SK-N-SH (cell line): ENCODE measurements at regions of chr5 and their contacts with region 1.

Region 1: DNA sequence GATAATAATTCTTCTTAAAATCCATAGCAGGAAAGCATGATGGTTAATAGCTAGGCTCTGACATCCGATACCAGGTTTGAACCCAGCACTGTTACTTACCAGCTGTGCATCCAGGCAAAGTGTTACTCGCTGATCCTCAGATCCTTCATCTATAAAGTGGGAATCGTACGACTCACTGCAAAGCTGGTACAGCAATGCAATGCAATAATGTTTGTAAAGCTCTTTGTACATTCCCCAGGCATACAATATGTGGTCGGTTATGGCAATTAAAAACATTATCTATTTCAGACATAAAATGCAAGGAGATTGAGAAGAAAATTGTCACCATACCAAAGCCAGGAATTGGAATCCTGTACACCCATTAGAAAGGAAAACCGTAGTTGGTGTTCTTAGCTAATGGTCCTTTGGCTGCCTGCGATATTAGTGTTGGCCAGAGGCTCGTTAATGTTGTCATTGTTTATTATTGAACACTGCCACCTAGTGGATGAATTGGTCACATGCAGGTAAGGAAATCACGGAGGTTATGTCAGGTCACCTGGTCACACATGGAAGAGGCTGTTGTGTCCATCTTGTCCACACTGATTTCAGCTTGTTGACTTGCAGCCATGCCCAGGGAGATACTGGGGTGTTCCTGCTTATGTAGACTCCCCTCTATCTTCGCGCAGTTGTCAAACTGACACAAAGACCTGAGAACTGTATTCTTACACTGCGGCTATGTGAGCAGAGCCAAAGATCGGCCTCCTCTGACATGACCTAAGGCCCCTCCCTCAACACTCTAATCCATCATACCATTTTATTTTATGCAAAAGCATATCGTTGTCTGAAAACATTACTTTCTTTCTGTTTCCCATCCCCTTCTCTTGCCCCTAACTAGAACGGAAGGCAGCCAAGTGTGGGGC is 87.5 kb upstream of the PPP2R2B start:
- DNase-seq: peak; percentile 62
- H3K4me3 ChIP-seq: no peak overlapping the region; a peak in 1 of 4 replicates
- H3K27ac ChIP-seq: no peak overlapping the region; a peak in 1 of 4 replicates
- H3K4me1 ChIP-seq: peaks cover 0 to 12% of the 10 kb centered on the region in 2 experiments; a peak in 2 of 4 replicates
- H3K27me3 ChIP-seq: no peaks in the 10 kb centered on the region
- CTCF ChIP-seq: peak; percentile 85
- EP300 ChIP-seq: no peak
- RAD21 ChIP-seq: peak; percentile 99

Region 2: DNA sequence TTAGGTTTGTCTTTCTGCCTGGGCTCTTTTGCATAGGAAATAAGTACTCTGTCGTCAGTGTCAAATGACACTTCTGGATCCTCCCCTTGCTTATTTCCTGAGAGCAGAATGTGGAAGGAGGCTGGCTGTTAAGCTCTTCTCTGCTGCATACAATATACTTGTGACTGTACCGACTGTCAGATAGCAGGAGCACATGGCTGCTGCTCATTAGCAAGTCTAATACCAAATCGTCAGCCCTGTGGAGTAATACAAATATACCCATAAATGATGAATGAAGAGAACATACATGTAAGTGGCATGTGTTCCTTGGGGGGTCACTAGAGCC is 449.9 kb before region 1 on chr5 and contains the start of gene GPR151:
- CTCF ChIA-PET with region 1: interaction called, 10 read pairs
- POLR2A ChIA-PET with region 1: no interaction called
- DNase-seq: no peak
- H3K4me3 ChIP-seq: no peak within 1 kb of the TSS
- H3K27ac ChIP-seq: no peak within 1 kb of the TSS
- H3K4me1 ChIP-seq: no peaks in the 10 kb centered on the region
- H3K27me3 ChIP-seq: no peaks in the 10 kb centered on the region
- CTCF ChIP-seq: no peak
- EP300 ChIP-seq: no peak
- RAD21 ChIP-seq: no peak
- polyA plus RNA-seq, gene GPR151: not detected in 2 replicates

Region 3: GRCh38 chr5:146541958-146542849 is 423.8 kb before region 1 on chr5:
- CTCF ChIA-PET with region 1: interaction called, 176 read pairs
- POLR2A ChIA-PET with region 1: no interaction called
- DNase-seq: peak; percentile 74
- H3K4me3 ChIP-seq: peak overlapping the region in 1 of 2 experiments; percentile 20; a peak in 1 of 4 replicates
- H3K27ac ChIP-seq: no peak overlapping the region
- H3K4me1 ChIP-seq: no peaks in the 10 kb centered on the region; a peak in 1 of 4 replicates
- H3K27me3 ChIP-seq: no peaks in the 10 kb centered on the region
- CTCF ChIP-seq: peak; percentile 94
- EP300 ChIP-seq: no peak
- RAD21 ChIP-seq: peak; percentile 96

Region 4: DNA sequence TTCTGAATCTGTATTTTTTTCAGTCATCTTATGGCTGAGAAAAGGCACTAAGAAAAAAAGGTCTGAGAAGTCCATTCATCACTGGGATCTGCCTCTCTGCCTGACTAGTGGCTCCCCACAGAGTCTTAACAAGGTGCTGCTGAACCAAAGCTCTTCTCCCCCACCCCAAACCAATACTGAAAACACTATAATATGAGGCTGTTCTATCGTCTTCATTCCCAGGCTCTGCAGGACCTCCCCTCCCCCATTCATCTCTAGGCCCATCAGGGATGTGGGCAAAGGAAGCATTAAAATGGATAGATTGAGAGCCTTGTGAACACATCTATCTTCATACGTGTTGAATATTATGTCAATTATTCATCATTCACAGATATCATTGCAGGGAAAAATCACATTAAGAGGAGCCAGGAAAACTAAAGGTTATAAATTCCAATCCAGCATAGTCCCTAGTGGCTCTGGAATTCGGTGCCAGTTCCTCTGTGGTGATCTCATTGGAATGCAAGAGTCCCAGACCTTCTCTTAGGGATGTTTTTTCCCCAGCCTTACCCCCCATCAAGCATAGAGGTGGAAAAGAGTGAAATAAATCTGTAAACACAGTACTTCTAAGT is 405.7 kb before region 1 on chr5:
- CTCF ChIA-PET with region 1: interaction called, 38 read pairs
- POLR2A ChIA-PET with region 1: no interaction called
- DNase-seq: no peak
- H3K4me3 ChIP-seq: peak overlapping the region in 1 of 2 experiments; percentile 3; a peak in 1 of 4 replicates
- H3K27ac ChIP-seq: peak overlapping the region in 1 of 2 experiments; percentile 72; a peak in 3 of 4 replicates
- H3K4me1 ChIP-seq: peaks cover 0 to 21% of the 10 kb centered on the region in 2 experiments
- H3K27me3 ChIP-seq: no peaks in the 10 kb centered on the region
- CTCF ChIP-seq: no peak
- EP300 ChIP-seq: peak in 1 of 2 experiments; percentile 63; a peak in 1 of 4 replicates
- RAD21 ChIP-seq: no peak

Region 5: DNA sequence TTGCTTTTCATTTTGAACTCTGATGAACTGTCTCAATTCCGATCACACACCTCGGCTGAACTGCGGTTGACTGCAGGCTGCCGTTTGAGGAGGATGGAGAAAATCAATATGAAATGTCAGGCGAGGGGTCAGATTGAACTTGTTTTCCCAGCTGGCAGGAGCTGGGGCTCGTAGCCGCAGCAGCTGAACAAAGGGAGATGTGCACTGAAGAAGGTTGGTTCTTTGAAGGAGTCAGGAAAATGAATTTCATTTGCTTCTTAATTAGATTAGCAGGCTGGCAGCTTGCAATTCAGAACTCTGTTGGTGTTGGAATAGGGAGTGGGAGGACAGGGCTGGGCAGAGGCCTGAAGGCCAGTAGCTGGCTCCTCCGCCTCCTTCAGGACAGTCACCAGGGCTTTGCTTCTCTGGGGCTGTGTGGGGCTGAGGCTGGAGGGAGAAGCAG is 332.7 kb before region 1 on chr5:
- CTCF ChIA-PET with region 1: interaction called, 12 read pairs
- POLR2A ChIA-PET with region 1: no interaction called
- DNase-seq: no peak
- H3K4me3 ChIP-seq: no peak overlapping the region
- H3K27ac ChIP-seq: no peak overlapping the region
- H3K4me1 ChIP-seq: peaks cover 0 to 12% of the 10 kb centered on the region in 2 experiments; a peak in 1 of 4 replicates
- H3K27me3 ChIP-seq: no peaks in the 10 kb centered on the region
- CTCF ChIP-seq: no peak
- EP300 ChIP-seq: no peak
- RAD21 ChIP-seq: no peak

Region 6: GRCh38 chr5:146947181-146947941 is 18.6 kb before region 1 on chr5:
- CTCF ChIA-PET with region 1: interaction called, 39 read pairs
- POLR2A ChIA-PET with region 1: no interaction called
- DNase-seq: peak; percentile 21
- H3K4me3 ChIP-seq: no peak overlapping the region; a peak in 1 of 4 replicates
- H3K27ac ChIP-seq: no peak overlapping the region
- H3K4me1 ChIP-seq: peaks cover 0 to 6% of the 10 kb centered on the region in 2 experiments; a peak in 2 of 4 replicates
- H3K27me3 ChIP-seq: no peaks in the 10 kb centered on the region
- CTCF ChIP-seq: peak; percentile 65
- EP300 ChIP-seq: no peak
- RAD21 ChIP-seq: peak; percentile 72

Region 7: GRCh38 chr5:147369742-147370374 is 403.8 kb after region 1 on chr5:
- CTCF ChIA-PET with region 1: interaction called, 20 read pairs
- POLR2A ChIA-PET with region 1: no interaction called
- DNase-seq: no peak
- H3K4me3 ChIP-seq: no peak overlapping the region
- H3K27ac ChIP-seq: peak overlapping the region in 1 of 2 experiments; percentile 34; a peak in 1 of 4 replicates
- H3K4me1 ChIP-seq: no peaks in the 10 kb centered on the region; a peak in 1 of 4 replicates
- H3K27me3 ChIP-seq: no peaks in the 10 kb centered on the region
- CTCF ChIP-seq: peak; percentile 94
- EP300 ChIP-seq: no peak
- RAD21 ChIP-seq: peak; percentile 84

Region 8: DNA sequence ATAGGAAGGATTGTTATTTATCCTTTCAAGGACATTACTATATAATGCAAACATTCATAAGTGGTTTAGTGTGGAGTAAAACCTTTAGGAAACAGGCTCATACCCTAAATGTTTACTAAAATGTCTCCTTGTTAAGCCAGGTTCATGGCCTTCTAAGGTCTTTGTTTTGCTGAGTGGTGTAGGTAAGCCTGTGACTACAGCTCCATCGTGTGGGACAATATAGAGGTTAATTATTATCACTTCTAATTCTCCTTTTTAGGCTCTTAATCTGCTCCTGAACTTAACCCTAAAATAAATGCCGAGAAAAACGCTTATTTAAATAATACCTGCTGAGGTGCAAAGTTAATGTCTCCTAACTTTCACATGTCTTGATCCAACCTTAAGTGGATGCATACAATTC is 1141.6 kb after region 1 on chr5:
- CTCF ChIA-PET with region 1: no interaction called
- POLR2A ChIA-PET with region 1: no interaction called
- DNase-seq: no peak
- H3K4me3 ChIP-seq: no peak overlapping the region
- H3K27ac ChIP-seq: no peak overlapping the region
- H3K4me1 ChIP-seq: no peaks in the 10 kb centered on the region
- H3K27me3 ChIP-seq: no peaks in the 10 kb centered on the region
- CTCF ChIP-seq: peak; percentile 21; the same call in 1 of the 2 replicates
- EP300 ChIP-seq: no peak
- RAD21 ChIP-seq: peak; percentile 10; the same call in 1 of the 2 replicates